IMR-90 (cell line): ENCODE measurements at regions of chr15 and their contacts with region 1.

Region 1: DNA sequence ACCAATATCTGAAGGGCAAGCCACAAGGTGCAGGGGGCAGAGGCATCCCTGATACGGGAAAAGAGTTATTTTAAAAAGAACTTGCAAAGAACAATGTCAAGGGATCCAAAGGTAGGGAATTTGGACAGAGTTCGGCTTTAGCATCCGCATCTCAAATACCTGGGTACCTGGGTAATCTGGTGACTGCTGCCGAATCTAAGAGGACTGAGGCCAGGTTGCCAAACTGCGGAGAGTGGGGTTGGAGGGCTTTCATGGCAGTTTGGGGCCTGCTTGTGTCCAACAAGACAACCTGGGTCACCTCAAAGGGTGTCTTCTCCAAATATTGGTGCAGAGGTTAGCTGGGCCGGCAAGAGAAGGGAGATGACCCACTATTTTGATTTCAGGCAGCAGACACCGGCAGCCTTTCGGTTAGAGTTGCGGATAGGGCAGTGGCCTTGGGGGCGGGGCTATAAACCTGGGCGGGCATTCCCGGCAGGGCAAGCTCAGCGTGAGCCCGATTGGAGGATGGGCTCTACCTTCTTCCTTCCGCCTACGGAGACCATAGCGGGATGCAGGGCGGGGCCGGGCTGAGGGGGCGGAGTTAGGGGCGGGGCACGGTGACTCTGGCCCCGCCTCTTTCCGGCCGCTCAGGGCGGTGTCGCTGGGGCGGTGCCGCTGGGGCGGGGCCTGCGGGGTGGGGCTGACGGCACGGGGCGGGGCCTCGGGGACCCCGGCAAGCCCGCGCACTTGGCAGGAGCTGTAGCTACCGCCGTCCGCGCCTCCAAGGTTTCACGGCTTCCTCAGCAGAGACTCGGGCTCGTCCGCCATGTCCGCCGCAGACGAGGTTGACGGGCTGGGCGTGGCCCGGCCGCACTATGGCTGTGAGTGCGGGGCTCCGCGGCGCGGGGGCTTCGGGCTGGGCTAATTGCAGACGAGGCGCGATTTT is at the start of gene IQGAP1:
- DNase-seq: peak; percentile 94
- ATAC-seq: peak; percentile 98
- H3K4me3 ChIP-seq: peak within 1 kb of the TSS; percentile 80
- H3K27ac ChIP-seq: peak within 1 kb of the TSS; percentile 74
- H3K4me1 ChIP-seq: peaks cover 7% of the 10 kb centered on the region
- H3K27me3 ChIP-seq: no peaks in the 10 kb centered on the region
- CTCF ChIP-seq: no peak
- POLR2A ChIP-seq: peak; percentile 85
- RAD21 ChIP-seq: 0 out of 2 replicates have a peak, but pooled peaks have one; percentile 12
- total RNA-seq, gene IQGAP1: 207 and 246 TPM in 2 replicates

Region 2: GRCh38 chr15:90352109-90352893 is 35.5 kb before region 1 on chr15 and contains the start of gene ZNF774:
- CTCF ChIA-PET with region 1: no interaction called
- POLR2A ChIA-PET with region 1: interaction called, 10 read pairs
- dilution Hi-C with region 1: no loop called
- in situ Hi-C with region 1: no loop called
- intact Hi-C with region 1: no loop called
- DNase-seq: peak; percentile 94
- ATAC-seq: peak; percentile 100
- H3K4me3 ChIP-seq: peak within 1 kb of the TSS; percentile 79
- H3K27ac ChIP-seq: no peak within 1 kb of the TSS; the same call in 1 of the 2 replicates
- H3K4me1 ChIP-seq: no peaks in the 10 kb centered on the region
- H3K27me3 ChIP-seq: no peaks in the 10 kb centered on the region
- CTCF ChIP-seq: no peak
- POLR2A ChIP-seq: 0 out of 2 replicates have a peak, but pooled peaks have one; percentile 24
- RAD21 ChIP-seq: no peak
- total RNA-seq, gene ZNF774: 1.1 TPM in 2 replicates

Region 3: DNA sequence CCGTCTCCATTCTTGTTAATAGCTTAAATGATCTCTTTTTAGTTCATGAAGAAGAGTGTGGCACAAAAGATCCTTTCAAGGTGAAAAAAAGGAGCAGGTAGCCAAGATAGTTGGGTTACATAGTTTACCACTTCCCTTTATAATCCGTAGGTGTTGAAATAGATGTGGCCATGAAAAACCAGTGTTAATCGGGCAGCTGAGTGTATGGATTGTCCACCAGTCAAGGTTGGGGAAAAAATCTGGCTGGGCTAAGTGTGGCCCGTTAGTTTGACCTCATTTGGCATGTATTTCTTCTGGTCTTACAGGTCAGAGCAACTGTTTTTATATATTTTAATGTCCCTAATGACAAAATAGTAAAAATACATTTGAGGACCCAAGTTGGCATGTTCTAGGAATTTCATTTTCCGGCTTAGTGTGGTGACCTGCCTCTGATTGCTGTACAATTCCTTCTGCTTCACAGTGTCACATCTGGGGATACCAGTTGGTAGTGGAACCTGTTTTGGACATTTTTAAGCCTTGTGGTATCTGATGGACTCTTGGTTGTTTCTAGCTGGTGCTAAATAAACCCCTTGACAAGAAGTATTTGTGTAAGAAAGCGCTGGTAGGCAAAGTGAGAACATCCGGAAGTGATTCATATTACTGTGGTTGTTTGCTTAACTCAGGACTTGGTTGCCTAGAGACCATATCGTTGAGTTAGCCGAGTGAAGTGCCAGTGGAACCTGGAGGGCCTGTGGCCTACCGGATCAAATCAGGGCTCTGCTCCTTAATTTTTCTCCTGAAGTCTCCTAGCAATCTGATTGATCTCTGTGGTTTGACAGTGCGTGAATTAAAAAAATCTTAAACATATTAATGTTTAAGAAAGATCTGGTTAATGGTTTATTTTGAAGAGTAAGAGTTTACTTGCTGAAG is 12.9 kb after region 1 on chr15:
- CTCF ChIA-PET with region 1: no interaction called
- POLR2A ChIA-PET with region 1: no interaction called
- dilution Hi-C with region 1: no loop called
- in situ Hi-C with region 1: no loop called
- intact Hi-C with region 1: loop called (anchors 1 kb)
- DNase-seq: peak; percentile 96
- ATAC-seq: peak; percentile 84
- H3K4me3 ChIP-seq: no peak overlapping the region; the same call in 1 of the 2 replicates
- H3K27ac ChIP-seq: peak overlapping the region; percentile 49; the same call in 1 of the 2 replicates
- H3K4me1 ChIP-seq: peaks cover 16% of the 10 kb centered on the region; the same call in 1 of the 2 replicates
- H3K27me3 ChIP-seq: no peaks in the 10 kb centered on the region
- CTCF ChIP-seq: no peak
- POLR2A ChIP-seq: peak; percentile 65
- RAD21 ChIP-seq: peak; percentile 7; the same call in 1 of the 2 replicates

Region 4: DNA sequence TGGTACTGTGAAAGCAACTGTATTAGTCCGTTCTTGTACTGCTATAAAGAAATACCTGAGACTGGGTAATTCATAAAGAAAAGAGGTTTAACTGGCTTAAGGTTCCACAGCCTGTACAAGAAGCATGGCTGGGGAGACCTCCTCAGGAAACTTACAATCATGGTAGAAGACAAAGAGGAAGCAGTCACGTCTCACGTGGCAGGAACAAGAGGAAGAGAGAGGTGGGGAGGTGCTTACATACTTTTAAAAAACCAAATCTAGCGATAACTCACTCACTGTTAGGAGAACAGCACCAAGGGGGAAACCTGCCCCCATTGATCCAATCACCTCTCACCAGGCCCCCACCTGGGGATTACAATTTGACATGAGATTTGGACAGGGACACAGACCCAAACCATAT is 49.2 kb after region 1 on chr15:
- CTCF ChIA-PET with region 1: no interaction called
- POLR2A ChIA-PET with region 1: no interaction called
- dilution Hi-C with region 1: no loop called
- in situ Hi-C with region 1: no loop called
- intact Hi-C with region 1: no loop called
- DNase-seq: no peak
- ATAC-seq: no peak
- H3K4me3 ChIP-seq: no peak overlapping the region
- H3K27ac ChIP-seq: no peak overlapping the region
- H3K4me1 ChIP-seq: no peaks in the 10 kb centered on the region; the same call in 1 of the 2 replicates
- H3K27me3 ChIP-seq: no peaks in the 10 kb centered on the region
- CTCF ChIP-seq: no peak
- POLR2A ChIP-seq: no peak
- RAD21 ChIP-seq: no peak